H1 (cell line): ENCODE measurements at regions of chr1 and their contacts with region 1.

Region 1: DNA sequence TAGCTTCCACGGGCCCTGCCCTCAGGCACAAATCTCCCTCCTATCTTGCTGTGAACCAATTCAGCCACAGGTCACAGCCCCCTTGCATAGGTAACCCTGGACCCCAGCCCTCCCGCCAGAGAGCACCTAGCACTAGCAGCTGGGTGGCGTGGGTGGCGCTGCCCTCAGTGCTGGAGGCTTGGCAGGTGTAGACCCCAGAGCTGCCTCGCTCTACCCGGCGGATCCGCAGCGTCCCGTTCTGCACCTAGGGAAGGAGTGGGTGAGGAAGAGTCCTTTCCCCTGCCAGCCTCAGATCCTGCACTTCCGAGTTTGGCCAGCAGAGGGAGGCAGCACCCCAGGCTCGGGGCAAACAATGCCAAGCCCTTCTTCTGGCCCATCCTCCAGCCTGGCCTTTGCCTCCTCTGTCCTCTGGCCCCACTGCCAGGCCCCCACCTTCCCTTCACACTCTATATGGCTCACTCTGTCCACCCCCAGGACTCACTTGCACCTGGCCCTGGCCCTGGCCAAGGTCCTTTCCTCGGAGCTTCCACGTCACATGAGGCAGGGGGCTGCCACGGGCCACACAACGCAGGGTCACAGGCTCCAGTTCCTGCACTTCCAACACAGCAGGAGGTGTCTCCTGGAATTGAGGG is 9.0 kb downstream of the IGSF9 start:
- DNase-seq: peak in 1 of 2 experiments; percentile 100
- H3K4me3 ChIP-seq: no peak overlapping the region
- H3K27ac ChIP-seq: no peak overlapping the region
- H3K4me1 ChIP-seq: peaks cover 0 to 12% (median 7%) of the 10 kb centered on the region in 4 experiments; a peak in 6 of 7 replicates
- H3K27me3 ChIP-seq: no peaks in the 10 kb centered on the region
- CTCF ChIP-seq: peak; percentile 97 to 99 (median 99)
- EP300 ChIP-seq: no peak
- POLR2A ChIP-seq: no peak
- RAD21 ChIP-seq: peak; percentile 98 to 99

Region 2: GRCh38 chr1:159737238-159737916 is 199.0 kb before region 1 on chr1:
- CTCF ChIA-PET with region 1: no interaction called
- POLR2A ChIA-PET with region 1: no interaction called
- DNase-seq: no peak
- H3K4me3 ChIP-seq: no peak overlapping the region
- H3K27ac ChIP-seq: no peak overlapping the region
- H3K4me1 ChIP-seq: no peaks in the 10 kb centered on the region
- H3K27me3 ChIP-seq: no peaks in the 10 kb centered on the region
- CTCF ChIP-seq: no peak
- EP300 ChIP-seq: no peak
- POLR2A ChIP-seq: no peak
- RAD21 ChIP-seq: no peak

Region 3: GRCh38 chr1:159804924-159805323 is 131.5 kb before region 1 on chr1:
- CTCF ChIA-PET with region 1: interaction called, 15 read pairs
- POLR2A ChIA-PET with region 1: no interaction called
- DNase-seq: no peak
- H3K4me3 ChIP-seq: no peak overlapping the region
- H3K27ac ChIP-seq: no peak overlapping the region
- H3K4me1 ChIP-seq: no peaks in the 10 kb centered on the region
- H3K27me3 ChIP-seq: no peaks in the 10 kb centered on the region
- CTCF ChIP-seq: no peak
- EP300 ChIP-seq: no peak
- POLR2A ChIP-seq: no peak
- RAD21 ChIP-seq: no peak

Region 4: DNA sequence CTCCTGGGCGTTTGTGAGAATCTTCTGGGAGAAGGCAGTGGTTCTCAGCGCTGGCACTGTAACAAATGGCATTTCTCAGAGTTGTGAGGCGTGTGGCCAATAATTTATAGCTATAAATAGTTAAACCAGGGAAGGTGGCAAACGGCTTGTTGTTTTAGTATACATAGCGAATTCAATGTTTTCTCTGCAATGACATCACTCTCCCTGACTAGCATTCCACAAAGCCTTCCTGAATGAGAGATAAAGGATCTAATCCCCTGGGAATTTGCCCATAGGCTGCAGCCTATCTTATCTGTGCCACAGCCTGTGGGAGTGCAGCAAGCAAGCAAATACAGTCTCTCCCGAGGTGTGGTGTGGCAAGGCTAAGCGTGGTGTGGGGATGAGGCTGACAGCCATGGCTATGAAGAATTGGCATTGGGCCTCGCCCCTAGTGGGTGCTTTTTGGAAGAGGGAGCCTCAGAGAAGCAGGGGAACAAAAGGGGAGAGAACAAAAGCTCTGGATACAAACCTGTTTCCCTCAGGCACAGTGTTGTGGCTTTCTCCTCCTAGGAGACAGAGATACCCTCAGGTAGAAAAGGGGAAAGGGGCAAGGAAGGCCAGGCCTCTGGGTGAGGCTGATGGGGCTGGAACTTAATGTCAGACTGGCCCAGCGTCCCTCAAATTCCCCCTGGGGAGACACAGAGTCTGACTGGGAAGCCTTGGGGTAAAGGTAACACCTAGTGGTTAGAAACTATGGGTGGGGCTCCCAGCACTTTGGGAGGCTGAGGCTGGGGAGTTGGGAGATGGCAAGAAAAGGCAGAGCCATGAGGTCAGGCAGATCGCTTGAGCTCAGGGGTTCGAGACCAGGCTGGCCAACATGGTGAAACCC is 20.0 kb before region 1 on chr1:
- CTCF ChIA-PET with region 1: interaction called, 53 read pairs
- POLR2A ChIA-PET with region 1: interaction called, 3 read pairs
- DNase-seq: no peak
- H3K4me3 ChIP-seq: no peak overlapping the region
- H3K27ac ChIP-seq: peak overlapping the region; percentile 58
- H3K4me1 ChIP-seq: peaks cover 9 to 24% (median 15%) of the 10 kb centered on the region in 4 experiments
- H3K27me3 ChIP-seq: no peaks in the 10 kb centered on the region
- CTCF ChIP-seq: no peak
- EP300 ChIP-seq: no peak
- POLR2A ChIP-seq: no peak
- RAD21 ChIP-seq: no peak

Region 5: GRCh38 chr1:159924981-159925712 is 11.2 kb before region 1 on chr1 and contains the start of gene TAGLN2:
- CTCF ChIA-PET with region 1: interaction called, 53 read pairs
- POLR2A ChIA-PET with region 1: interaction called, 14 read pairs
- DNase-seq: peak in 1 of 2 experiments; percentile 92
- H3K4me3 ChIP-seq: peak within 1 kb of the TSS; percentile 55 to 63 (median 59)
- H3K27ac ChIP-seq: no peak within 1 kb of the TSS
- H3K4me1 ChIP-seq: peaks cover 5 to 21% (median 16%) of the 10 kb centered on the region in 4 experiments
- H3K27me3 ChIP-seq: peaks cover 0 to 17% (median 8%) of the 10 kb centered on the region in 4 experiments; a peak in 5 of 7 replicates
- CTCF ChIP-seq: no peak; a peak in 1 of 4 replicates
- EP300 ChIP-seq: no peak
- POLR2A ChIP-seq: peak in 1 of 2 experiments; percentile 74; a peak in 2 of 3 replicates
- RAD21 ChIP-seq: peak in 1 of 2 experiments; percentile 16; a peak in 1 of 4 replicates
- total RNA-seq, gene TAGLN2: 86.0 and 93.0 TPM in 2 replicates

Region 6: DNA sequence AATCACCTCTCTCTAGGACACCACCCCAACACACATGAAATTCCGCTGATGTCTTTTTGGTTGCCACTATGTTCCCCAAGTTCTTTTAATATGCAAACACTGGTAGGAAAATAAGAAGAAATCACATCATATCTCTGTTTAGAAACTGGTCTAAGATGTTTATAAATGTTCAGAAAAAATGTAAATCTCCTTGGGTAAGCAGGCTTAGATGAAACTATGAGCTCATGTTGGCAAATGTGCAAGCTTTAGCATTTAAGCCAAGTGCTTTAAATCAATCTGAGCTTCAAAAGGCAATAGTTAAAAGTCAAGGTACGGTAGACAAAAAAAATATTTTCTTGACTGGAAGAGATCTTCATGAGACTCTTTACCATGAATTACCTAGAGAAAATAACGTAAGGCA is 42.9 kb after region 1 on chr1:
- CTCF ChIA-PET with region 1: no interaction called
- POLR2A ChIA-PET with region 1: no interaction called
- DNase-seq: no peak
- H3K4me3 ChIP-seq: no peak overlapping the region
- H3K27ac ChIP-seq: no peak overlapping the region
- H3K4me1 ChIP-seq: 0 out of 7 replicates have a peak, but pooled peaks cover 0 to 2% (median 0%) of the 10 kb centered on the region in 4 experiments
- H3K27me3 ChIP-seq: peaks cover 0 to 3% (median under 1%) of the 10 kb centered on the region in 4 experiments; a peak in 1 of 7 replicates
- CTCF ChIP-seq: no peak
- EP300 ChIP-seq: no peak
- POLR2A ChIP-seq: no peak
- RAD21 ChIP-seq: no peak

Region 7: GRCh38 chr1:160108888-160109662 is 172.7 kb after region 1 on chr1:
- CTCF ChIA-PET with region 1: no interaction called
- POLR2A ChIA-PET with region 1: no interaction called
- DNase-seq: peak in 1 of 2 experiments; percentile 69
- H3K4me3 ChIP-seq: no peak overlapping the region
- H3K27ac ChIP-seq: no peak overlapping the region
- H3K4me1 ChIP-seq: peaks cover 8 to 32% (median 20%) of the 10 kb centered on the region in 4 experiments
- H3K27me3 ChIP-seq: no peaks in the 10 kb centered on the region; a peak in 1 of 7 replicates
- CTCF ChIP-seq: peak; percentile 4 to 73 (median 44)
- EP300 ChIP-seq: peak in 1 of 2 experiments; percentile 49; a peak in 1 of 3 replicates
- POLR2A ChIP-seq: no peak
- RAD21 ChIP-seq: peak; percentile 24 to 35; a peak in 3 of 4 replicates